ENCODE measurements at regions of chr4 and their contacts with region 1.

Region 1: GRCh38 chr4:82721819-82722423 is 76.7 kb downstream of the SCD5 start:
- DNase-seq: peak in 1 of 2 experiments; percentile 18
- H3K4me3 ChIP-seq: no peak overlapping the region
- H3K27ac ChIP-seq: no peak overlapping the region
- H3K4me1 ChIP-seq: no peaks in the 10 kb centered on the region
- H3K27me3 ChIP-seq: no peaks in the 10 kb centered on the region
- CTCF ChIP-seq: peak; percentile 57

Region 2: DNA sequence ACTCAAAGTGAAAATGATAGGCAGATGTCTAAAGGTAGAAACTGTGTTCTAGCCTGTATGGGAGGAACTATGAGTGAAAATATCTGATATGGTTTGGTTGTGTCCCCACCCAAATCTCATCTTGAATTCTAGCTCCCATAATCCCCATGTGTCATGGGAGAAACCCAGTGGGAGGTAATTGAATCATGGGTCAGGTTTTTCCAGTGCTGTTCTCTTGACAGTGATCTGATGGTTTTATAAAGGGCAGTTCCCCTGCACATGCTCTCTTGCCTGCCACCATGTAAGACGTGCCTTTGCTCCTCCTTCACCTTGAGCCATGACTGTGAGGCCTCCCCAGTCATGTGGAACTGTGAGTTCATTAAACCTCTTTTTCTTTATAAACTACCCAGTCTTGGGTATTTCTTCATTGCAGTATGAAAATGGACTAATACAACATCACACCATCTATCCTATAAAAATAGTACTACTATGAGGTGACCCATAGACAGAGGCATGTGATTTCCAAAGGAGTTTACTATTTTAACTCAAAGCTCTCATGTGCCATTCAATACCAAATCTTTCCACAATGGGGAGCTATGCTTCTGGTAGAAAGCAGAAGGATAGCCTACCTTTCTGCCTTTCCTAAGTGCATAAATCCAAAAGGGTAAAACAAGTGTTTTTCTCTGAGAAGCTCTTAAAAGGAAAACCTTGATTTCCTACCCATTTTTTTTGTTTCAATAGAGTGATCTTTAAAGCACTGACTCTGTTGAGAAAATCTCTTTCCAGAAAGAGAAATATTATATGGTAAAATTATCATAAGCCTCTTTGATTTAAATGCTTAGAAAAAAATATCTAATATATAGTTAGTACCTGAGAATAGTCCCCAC is 130.2 kb after region 1 on chr4:
- CTCF ChIA-PET with region 1: interaction called, 12 read pairs
- POLR2A ChIA-PET with region 1: no interaction called
- intact Hi-C with region 1: no loop called
- DNase-seq: no peak
- H3K4me3 ChIP-seq: no peak overlapping the region
- H3K27ac ChIP-seq: no peak overlapping the region
- H3K4me1 ChIP-seq: no peaks in the 10 kb centered on the region
- H3K27me3 ChIP-seq: no peaks in the 10 kb centered on the region
- CTCF ChIP-seq: peak; percentile 64